Heart left ventricle (tissue), 16 donors: ENCODE measurements at regions of chr13 and their contacts with region 1.

Region 1: DNA sequence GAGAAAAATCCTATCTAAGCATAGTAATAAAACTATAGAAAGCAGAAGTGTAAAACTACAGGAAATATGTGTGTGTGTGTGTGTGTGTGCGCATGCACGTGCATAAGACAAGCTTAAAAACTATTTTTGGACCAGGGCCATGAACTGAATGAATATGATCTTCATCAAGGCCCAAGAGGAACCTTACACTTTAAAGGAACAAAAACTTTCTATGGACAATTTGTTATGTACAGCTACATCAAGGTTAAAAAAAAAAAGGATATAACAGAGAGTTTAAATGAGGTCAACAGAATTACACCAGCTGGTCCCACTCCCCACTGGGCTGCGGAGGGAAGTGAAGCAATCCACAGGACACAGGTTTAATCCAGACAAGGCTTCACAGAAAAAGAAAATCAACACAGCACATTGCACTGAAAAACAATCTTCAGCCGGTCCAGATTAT is 151.1 kb downstream of the LHFPL6 start:
- DNase-seq: peak; percentile 49 to 71 (median 63)
- ATAC-seq: peak; percentile 59 to 83 (median 78)
- H3K4me3 ChIP-seq: no peak overlapping the region
- H3K27ac ChIP-seq: peak overlapping the region; percentile 66 to 84 (median 78)
- H3K4me1 ChIP-seq: peaks cover 17 to 90% (median 76%) of the 10 kb centered on the region in 12 donors
- H3K27me3 ChIP-seq: no peaks in the 10 kb centered on the region
- CTCF ChIP-seq: no peak
- POLR2A ChIP-seq: no peak

Region 2: DNA sequence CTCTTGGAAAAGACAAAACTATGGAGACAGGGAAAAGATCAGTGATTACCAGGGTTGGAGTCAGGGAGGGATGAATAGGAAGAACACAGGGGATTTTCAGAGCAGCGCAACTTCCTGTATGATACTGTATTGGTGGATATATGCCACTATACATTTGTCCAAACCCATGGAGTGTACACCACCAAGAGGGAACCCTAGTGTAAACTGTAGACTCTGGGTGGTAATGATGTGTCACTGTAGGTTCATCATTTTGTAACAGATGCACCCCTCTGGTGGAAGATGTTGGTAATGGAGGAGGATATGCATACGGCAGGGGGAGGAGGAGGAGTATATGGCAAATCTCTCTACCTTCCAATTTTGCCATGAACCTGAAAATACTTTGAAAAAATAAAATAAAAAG is 1034.2 kb before region 1 on chr13:
- intact Hi-C with region 1: no loop called
- DNase-seq: no peak
- ATAC-seq: no peak
- H3K4me3 ChIP-seq: no peak overlapping the region
- H3K27ac ChIP-seq: no peak overlapping the region
- H3K4me1 ChIP-seq: peaks cover 0 to 23% (median 0%) of the 10 kb centered on the region in 12 donors
- H3K27me3 ChIP-seq: no peaks in the 10 kb centered on the region
- CTCF ChIP-seq: peak in 6 of 12 donors; percentile 11 to 38 (median 28)
- POLR2A ChIP-seq: no peak

Region 3: GRCh38 chr13:39501702-39502324 is 49.9 kb after region 1 on chr13:
- intact Hi-C with region 1: loop called in 1 of 10 experiments (anchors 5 kb)
- DNase-seq: peak in 4 of 5 donors; percentile 61 to 78 (median 70)
- ATAC-seq: peak; percentile 89 to 93 (median 91)
- H3K4me3 ChIP-seq: no peak overlapping the region
- H3K27ac ChIP-seq: peak overlapping the region; percentile 22 to 87 (median 76)
- H3K4me1 ChIP-seq: peaks cover 0 to 88% (median 49%) of the 10 kb centered on the region in 12 donors
- H3K27me3 ChIP-seq: no peaks in the 10 kb centered on the region
- CTCF ChIP-seq: no peak
- POLR2A ChIP-seq: no peak

Region 4: DNA sequence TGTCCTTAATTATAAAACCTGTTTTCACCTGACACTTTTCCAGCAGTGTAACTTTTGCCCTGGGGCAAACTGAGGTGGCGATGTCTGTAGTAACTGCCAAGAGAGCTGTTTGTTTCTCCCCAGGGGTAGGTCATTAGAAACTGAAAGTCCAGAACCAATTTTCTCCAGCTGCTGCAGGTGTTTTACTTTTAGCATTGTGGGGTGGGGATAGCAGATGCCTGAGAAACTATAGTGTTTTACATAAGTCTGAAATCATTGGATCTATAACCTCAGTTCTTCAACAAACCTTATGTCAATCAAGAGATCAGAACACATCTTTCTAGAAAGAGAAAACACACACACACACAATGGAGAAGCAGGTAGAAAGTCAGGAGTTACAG is 58.4 kb after region 1 on chr13:
- intact Hi-C with region 1: loop called in 1 of 10 experiments (anchors 10 kb)
- DNase-seq: no peak
- ATAC-seq: peak in 1 of 4 donors; percentile 18
- H3K4me3 ChIP-seq: no peak overlapping the region
- H3K27ac ChIP-seq: peak overlapping the region in 1 of 12 donors; percentile 18
- H3K4me1 ChIP-seq: peaks cover 4 to 67% (median 26%) of the 10 kb centered on the region in 12 donors
- H3K27me3 ChIP-seq: no peaks in the 10 kb centered on the region
- CTCF ChIP-seq: no peak
- POLR2A ChIP-seq: no peak

Region 5: DNA sequence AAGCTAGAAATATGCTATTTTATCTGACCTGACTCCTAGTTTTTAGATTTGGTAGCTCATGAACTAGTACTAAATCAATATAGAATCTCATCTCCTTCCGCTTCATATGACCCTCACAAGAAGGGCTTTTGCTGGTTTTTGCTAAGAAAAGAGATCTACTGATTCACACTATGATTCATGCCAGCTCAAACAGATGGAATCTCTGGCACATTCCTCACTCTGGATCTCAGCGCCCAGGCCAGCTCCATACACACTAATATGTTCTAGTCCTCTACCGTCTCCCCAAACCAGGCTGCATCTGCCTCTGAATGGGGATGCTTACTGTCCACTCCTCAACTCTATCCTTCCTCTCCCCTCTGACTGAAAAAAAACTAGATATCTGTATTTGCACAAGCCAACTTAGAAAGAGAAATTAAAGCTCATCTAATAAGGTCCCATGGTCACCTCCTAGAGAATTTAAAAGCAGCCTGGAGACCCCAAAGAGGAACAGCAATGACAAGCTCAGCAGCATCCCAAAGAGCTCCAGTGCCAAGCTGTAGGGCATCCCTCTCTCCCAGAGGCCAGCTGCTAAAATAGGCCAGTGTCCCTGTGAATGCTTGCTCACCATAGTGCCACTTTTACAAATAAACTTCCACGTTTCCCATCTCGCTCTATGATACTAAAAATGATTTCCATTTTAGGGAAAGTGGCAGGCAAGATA is 76.2 kb after region 1 on chr13:
- intact Hi-C with region 1: no loop called
- DNase-seq: peak in 1 of 5 donors; percentile 50
- ATAC-seq: peak in 3 of 4 donors; percentile 53 to 73 (median 67)
- H3K4me3 ChIP-seq: no peak overlapping the region
- H3K27ac ChIP-seq: peak overlapping the region in 9 of 12 donors; percentile 2 to 36 (median 9)
- H3K4me1 ChIP-seq: peaks cover 3 to 88% (median 65%) of the 10 kb centered on the region in 12 donors
- H3K27me3 ChIP-seq: no peaks in the 10 kb centered on the region
- CTCF ChIP-seq: no peak
- POLR2A ChIP-seq: no peak